Activated CD4-positive, alpha-beta T cell treated with anti-CD3 and anti-CD28 coated beads for 36 hours (primary cell): ENCODE measurements at regions of chr9 and their contacts with region 1.

Region 1: GRCh38 chr9:21357479-21358460 is 7.1 kb upstream of the IFNA6 start:
- DNase-seq: peak; percentile 40
- ATAC-seq: peak; percentile 94
- H3K4me3 Mint-ChIP-seq: peak overlapping the region; percentile 35
- H3K27ac Mint-ChIP-seq: peak overlapping the region; percentile 70
- H3K4me1 Mint-ChIP-seq: peaks cover 19% of the 10 kb centered on the region
- H3K27me3 Mint-ChIP-seq: peaks cover 18% of the 10 kb centered on the region

Region 2: GRCh38 chr9:21395778-21396717 is 38.3 kb after region 1 on chr9:
- CTCF ChIA-PET with region 1: interaction called, 8 read pairs
- POLR2A ChIA-PET with region 1: no interaction called
- intact Hi-C with region 1: loop called (anchors 2 to 5 kb)
- DNase-seq: peak; percentile 78
- ATAC-seq: peak; percentile 74
- H3K4me3 Mint-ChIP-seq: peak overlapping the region; percentile 52
- H3K27ac Mint-ChIP-seq: peak overlapping the region; percentile 66
- H3K4me1 Mint-ChIP-seq: peaks cover 15% of the 10 kb centered on the region
- H3K27me3 Mint-ChIP-seq: peaks cover 47% of the 10 kb centered on the region

Region 3: DNA sequence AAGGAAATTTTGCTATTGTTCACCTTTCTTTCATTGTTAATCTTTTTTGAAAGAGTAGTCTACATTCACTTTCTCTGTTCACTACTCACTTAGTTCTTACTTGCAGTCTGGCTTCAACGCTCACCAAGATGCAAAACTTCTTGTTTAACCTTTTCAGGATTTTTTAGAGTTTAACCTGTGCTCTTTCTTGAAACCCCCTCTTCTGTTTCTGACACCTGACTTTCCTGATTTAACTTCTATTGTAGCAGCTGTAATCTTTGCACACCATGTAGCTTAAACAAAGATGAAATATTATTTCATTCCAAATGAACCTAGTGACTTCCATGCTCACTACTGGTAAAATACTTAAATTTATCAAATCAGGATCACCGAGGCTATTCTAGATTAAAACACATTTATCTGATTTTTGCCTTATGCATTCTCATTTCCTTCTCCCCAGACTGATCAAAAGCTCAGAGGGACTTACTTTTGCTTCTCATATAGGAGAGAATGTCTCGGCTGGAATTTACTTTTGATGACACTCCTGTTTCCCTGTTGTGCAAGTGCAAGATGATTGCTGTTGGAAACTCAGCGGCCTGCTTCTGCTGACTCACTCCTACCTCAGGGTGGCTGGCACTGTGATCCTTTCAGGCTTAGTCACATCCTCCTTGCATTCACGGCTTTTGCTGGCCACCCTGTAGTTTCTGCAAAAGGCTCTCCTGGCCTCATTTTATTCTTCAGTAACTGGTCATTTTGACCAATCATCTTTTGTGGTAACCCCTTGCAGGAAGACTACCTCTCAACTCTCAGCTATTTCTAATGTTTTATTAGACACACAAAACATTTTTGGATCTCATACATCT is 233.7 kb after region 1 on chr9:
- CTCF ChIA-PET with region 1: no interaction called
- POLR2A ChIA-PET with region 1: no interaction called
- intact Hi-C with region 1: no loop called
- DNase-seq: peak; percentile 81
- ATAC-seq: peak; percentile 99
- H3K4me3 Mint-ChIP-seq: no peak overlapping the region
- H3K27ac Mint-ChIP-seq: peak overlapping the region; percentile 11
- H3K4me1 Mint-ChIP-seq: peaks cover 18% of the 10 kb centered on the region
- H3K27me3 Mint-ChIP-seq: no peaks in the 10 kb centered on the region